HEK293T (cell line): ENCODE measurements at regions of chr10 and their contacts with region 1.

Region 1: GRCh38 chr10:93702211-93703001 is at the start of gene FRA10AC1:
- DNase-seq: peak; percentile 90

Region 2: GRCh38 chr10:93762979-93763391 is 60.6 kb after region 1 on chr10:
- CTCF ChIA-PET with region 1: no interaction called
- POLR2A ChIA-PET with region 1: no interaction called
- DNase-seq: no peak

Region 3: GRCh38 chr10:93816123-93816747 is 113.8 kb after region 1 on chr10:
- CTCF ChIA-PET with region 1: interaction called, 4 read pairs
- POLR2A ChIA-PET with region 1: interaction called, 10 read pairs
- DNase-seq: peak; percentile 72